Activated T-helper 1 cell treated with anti-CD3 and anti-CD28 coated beads, Interleukin-12 subunit alpha, Interleukin-12 subunit beta, Interleukin-2, Interleukin-4 antibody, amounts not matched to agents 30 ng/mL and 10 ng/mL and 1 ng/mL, durations not matched to agents 14 hours and 24 hours and 36 hours (primary cell): ENCODE measurements at regions of chr4 and their contacts with region 1.

Region 1: DNA sequence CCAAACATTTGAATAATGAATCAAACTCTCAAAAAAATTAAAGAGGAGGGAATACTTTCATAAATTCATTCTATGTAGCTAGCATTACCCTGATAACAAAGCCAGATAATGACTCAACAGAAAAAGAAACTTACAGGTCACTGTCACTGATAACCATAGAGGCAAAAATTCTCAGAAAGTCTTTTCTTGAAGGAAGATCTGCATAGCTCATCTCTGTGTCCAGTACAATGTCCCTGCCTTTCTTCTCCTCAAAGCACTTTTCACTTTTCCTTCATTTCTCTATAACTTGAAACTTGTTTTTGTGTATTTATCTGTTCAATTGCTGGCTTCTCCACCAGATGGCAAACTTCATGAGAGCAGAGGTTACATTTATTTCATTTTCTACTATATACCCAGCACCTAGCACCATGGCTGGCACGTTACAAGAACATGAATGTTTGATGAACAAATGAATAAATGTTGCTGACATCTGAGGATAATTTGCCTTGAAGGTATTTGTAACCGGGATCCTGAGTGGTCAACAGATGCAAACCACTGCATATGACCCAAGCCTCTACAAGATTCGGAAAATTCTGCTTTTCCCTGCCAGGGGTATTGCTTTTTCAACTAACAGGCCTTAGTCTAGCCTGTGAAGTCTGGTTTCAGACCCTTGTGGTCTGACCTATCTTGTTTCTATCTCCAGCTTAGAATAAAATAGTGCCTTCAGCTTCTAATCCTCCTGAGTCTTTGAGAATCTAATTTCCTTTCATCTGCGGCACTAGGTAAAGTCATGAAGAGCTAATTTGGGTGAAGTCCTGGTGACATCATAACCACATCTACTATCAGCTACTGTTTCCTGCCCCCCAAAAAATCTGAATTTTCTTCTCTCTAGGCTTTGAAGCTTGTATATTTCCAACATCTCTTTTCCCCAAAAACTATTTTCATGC is 52.5 kb upstream of the ANTXR2 start:
- DNase-seq: peak; percentile 17
- H3K4me3 Mint-ChIP-seq: peak overlapping the region; percentile 71
- H3K27ac Mint-ChIP-seq: peak overlapping the region; percentile 92
- H3K4me1 Mint-ChIP-seq: peaks cover 68% of the 10 kb centered on the region
- H3K27me3 Mint-ChIP-seq: no peaks in the 10 kb centered on the region

Region 2: GRCh38 chr4:79949178-79949577 is 176.3 kb before region 1 on chr4:
- intact Hi-C with region 1: no loop called
- DNase-seq: no peak
- H3K4me3 Mint-ChIP-seq: no peak overlapping the region
- H3K27ac Mint-ChIP-seq: no peak overlapping the region
- H3K4me1 Mint-ChIP-seq: peaks cover 4% of the 10 kb centered on the region
- H3K27me3 Mint-ChIP-seq: no peaks in the 10 kb centered on the region

Region 3: DNA sequence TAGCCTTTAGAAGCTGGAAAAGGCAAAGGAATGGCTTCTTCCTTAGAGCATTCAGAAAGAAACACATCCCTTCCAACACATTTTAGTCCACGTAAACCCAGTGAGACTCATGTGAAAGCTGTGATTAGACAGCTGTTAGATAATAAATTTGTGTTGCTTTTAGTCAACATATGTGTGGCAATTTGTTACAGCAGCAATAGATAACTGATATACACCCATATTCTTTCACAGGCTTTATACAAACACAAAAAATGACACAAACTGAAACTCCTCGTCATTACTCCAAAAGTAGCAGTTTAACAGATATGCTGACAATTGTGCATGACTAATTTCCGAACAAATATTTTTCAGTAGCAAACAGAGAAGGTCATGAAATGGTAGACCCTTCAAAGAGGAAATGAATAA is 117.8 kb before region 1 on chr4:
- intact Hi-C with region 1: loop called (anchors 2 kb)
- DNase-seq: no peak
- H3K4me3 Mint-ChIP-seq: peak overlapping the region; percentile 41
- H3K27ac Mint-ChIP-seq: peak overlapping the region; percentile 88
- H3K4me1 Mint-ChIP-seq: peaks cover 74% of the 10 kb centered on the region
- H3K27me3 Mint-ChIP-seq: no peaks in the 10 kb centered on the region

Region 4: DNA sequence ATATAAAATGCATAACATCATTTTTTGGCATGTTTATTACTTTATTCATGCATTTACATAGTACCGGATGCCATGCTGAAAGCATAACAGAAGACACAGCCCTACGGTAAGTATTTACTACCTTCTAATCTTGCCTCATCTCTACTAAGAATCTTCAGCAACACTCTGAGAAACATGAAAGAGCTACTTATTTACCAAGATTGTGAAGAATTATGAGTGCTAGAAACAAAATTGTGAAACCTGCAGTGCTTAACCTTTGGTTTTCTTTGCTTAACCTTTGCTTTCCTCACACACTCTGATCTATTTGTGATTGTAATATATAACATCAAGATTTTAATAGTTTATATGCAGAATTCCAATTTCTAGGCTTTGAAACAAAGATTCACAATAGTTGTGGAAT is 59.9 kb before region 1 on chr4:
- intact Hi-C with region 1: no loop called
- DNase-seq: no peak
- H3K4me3 Mint-ChIP-seq: no peak overlapping the region
- H3K27ac Mint-ChIP-seq: peak overlapping the region; percentile 1
- H3K4me1 Mint-ChIP-seq: peaks cover 69% of the 10 kb centered on the region
- H3K27me3 Mint-ChIP-seq: no peaks in the 10 kb centered on the region

Region 5: GRCh38 chr4:80153874-80154544 is 28.5 kb after region 1 on chr4:
- intact Hi-C with region 1: loop called (anchors 1 kb)
- DNase-seq: no peak
- H3K4me3 Mint-ChIP-seq: peak overlapping the region; percentile 21
- H3K27ac Mint-ChIP-seq: peak overlapping the region; percentile 90
- H3K4me1 Mint-ChIP-seq: peaks cover 27% of the 10 kb centered on the region
- H3K27me3 Mint-ChIP-seq: peaks cover 3% of the 10 kb centered on the region

Region 6: DNA sequence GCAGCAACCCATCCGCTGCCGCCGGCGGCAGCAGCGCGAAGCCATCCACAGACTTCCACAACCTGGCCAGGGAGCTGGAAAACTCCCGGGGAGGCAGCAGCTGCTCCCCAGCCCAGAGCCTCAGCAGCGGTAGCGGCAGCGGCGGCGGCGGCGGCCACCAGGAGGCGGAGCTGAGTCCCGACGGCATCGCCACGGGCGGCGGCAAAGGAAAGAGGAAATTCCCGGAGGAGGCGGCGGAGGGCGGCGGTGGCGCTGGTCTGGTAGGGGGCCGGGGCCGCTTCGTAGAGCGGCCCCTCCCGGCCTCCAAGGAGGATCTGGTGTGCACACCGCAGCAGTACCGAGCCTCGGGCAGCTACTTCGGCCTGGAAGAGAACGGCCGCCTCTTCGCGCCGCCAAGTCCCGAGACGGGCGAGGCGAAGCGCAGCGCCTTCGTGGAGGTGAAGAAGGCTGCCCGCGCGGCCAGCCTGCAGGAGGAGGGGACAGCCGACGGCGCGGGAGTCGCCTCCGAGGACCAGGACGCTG is 76.7 kb after region 1 on chr4:
- intact Hi-C with region 1: loop called (anchors 1 kb)
- DNase-seq: peak; percentile 79
- H3K4me3 Mint-ChIP-seq: peak overlapping the region; percentile 80
- H3K27ac Mint-ChIP-seq: peak overlapping the region; percentile 73
- H3K4me1 Mint-ChIP-seq: peaks cover 29% of the 10 kb centered on the region
- H3K27me3 Mint-ChIP-seq: peaks cover 21% of the 10 kb centered on the region